ENCODE measurements at regions of chr2 and their contacts with region 1.

Region 1: GRCh38 chr2:218186355-218186766 is 19.6 kb upstream of the CXCR1 start:
- DNase-seq: peak; percentile 75
- ATAC-seq: peak; percentile 98
- H3K4me3 ChIP-seq: no peak overlapping the region
- H3K27ac ChIP-seq: no peak overlapping the region
- H3K4me1 ChIP-seq: peaks cover 0 to 8% of the 10 kb centered on the region in 2 experiments; a peak in 2 of 4 replicates
- H3K27me3 ChIP-seq: no peaks in the 10 kb centered on the region
- CTCF ChIP-seq: peak; percentile 79 to 83 (median 82)
- POLR2A ChIP-seq: no peak
- RAD21 ChIP-seq: peak; percentile 87

Region 2: GRCh38 chr2:218257390-218257981 is 71.1 kb after region 1 on chr2:
- CTCF ChIA-PET with region 1: no interaction called
- POLR2A ChIA-PET with region 1: no interaction called
- RAD21 ChIA-PET with region 1: no interaction called
- intact Hi-C with region 1: loop called (anchors 5 kb)
- DNase-seq: peak; percentile 35
- ATAC-seq: peak; percentile 75
- H3K4me3 ChIP-seq: no peak overlapping the region
- H3K27ac ChIP-seq: peak overlapping the region; percentile 19; the same call in 1 of the 2 replicates
- H3K4me1 ChIP-seq: peaks cover 0 to 5% of the 10 kb centered on the region in 2 experiments; a peak in 1 of 4 replicates
- H3K27me3 ChIP-seq: no peaks in the 10 kb centered on the region
- CTCF ChIP-seq: peak; percentile 59 to 82 (median 76); a peak in 5 of 6 replicates
- POLR2A ChIP-seq: no peak
- RAD21 ChIP-seq: peak; percentile 58

Measured in HCT116 (cell line).